H1 (cell line): ENCODE measurements at regions of chr18 and their contacts with region 1.

Region 1: DNA sequence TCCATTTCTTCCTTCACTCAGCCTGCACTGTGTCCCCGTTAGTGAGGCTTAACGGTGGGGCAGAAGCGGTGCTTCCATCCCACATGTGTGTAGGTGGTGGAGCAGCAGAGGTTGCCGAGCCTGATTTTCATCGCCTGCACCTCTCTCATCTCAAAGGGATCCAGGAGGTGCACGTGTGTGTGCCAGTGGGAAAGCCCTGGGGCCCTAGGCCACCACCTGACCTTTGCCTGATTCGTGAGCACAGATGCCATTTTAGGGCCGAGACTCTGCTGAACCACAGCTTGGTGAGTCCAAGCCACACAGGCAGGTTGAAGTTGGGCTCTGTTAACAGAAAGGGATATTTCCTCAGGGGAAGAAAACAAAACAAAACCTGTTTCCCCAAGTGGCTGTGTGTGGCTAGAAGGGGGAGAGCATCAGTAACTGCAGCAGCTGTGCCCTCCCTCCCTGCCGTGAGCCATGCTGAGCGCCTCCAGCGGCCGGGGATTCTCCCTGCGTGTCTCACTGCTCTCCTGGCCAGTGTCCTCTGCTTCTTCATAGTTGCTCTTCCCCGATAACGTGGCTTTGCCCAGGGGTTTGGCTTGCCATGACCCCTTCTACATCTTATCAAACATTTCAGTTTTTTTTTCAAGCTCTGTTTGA is 81.5 kb downstream of the MAPRE2 start:
- DNase-seq: peak in 1 of 2 experiments; percentile 73
- H3K4me3 ChIP-seq: no peak overlapping the region
- H3K27ac ChIP-seq: no peak overlapping the region
- H3K4me1 ChIP-seq: peaks cover 0 to 11% (median 5%) of the 10 kb centered on the region in 4 experiments; a peak in 6 of 7 replicates
- H3K27me3 ChIP-seq: no peaks in the 10 kb centered on the region
- CTCF ChIP-seq: peak; percentile 32 to 80 (median 72); a peak in 3 of 4 replicates
- EP300 ChIP-seq: no peak
- POLR2A ChIP-seq: no peak
- RAD21 ChIP-seq: peak; percentile 32 to 43

Region 2: DNA sequence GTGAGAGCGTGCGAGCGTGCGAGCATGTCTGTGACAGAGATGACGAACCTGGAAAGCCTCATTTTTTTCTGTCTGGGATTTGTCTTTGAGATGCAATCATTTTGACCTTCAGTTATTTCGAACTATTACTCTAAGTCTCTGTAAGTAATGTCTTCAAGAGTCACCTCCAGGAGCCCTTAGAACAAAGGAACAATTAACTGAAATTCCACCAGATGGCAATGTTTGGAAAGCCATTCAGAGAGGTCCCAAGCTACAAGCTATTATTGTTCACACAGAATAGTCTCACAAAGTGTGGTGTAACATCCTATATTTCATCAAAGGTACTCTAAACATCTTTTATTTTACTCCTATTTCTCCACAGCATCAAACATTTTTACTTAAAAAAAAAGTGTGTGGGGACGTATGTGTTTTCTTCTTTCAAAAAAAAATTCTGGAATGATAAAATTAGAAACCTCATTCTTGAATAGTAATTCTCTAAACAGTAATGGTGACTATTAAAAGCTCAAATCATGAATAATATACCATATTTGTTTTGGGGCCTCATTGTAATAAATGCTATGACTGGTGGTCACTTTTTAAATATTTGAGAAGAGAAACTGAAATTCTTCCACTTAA is 116.6 kb before region 1 on chr18:
- CTCF ChIA-PET with region 1: interaction called, 20 read pairs
- POLR2A ChIA-PET with region 1: no interaction called
- DNase-seq: no peak
- H3K4me3 ChIP-seq: no peak overlapping the region
- H3K27ac ChIP-seq: no peak overlapping the region
- H3K4me1 ChIP-seq: peaks cover 0 to 2% (median 0%) of the 10 kb centered on the region in 4 experiments; a peak in 1 of 7 replicates
- H3K27me3 ChIP-seq: no peaks in the 10 kb centered on the region
- CTCF ChIP-seq: peak in 2 of 3 experiments; percentile 57 to 61; a peak in 3 of 4 replicates
- EP300 ChIP-seq: no peak
- POLR2A ChIP-seq: no peak
- RAD21 ChIP-seq: peak; percentile 82 to 89

Region 3: GRCh38 chr18:35073186-35074105 is 49.3 kb before region 1 on chr18:
- CTCF ChIA-PET with region 1: interaction called, 28 read pairs
- POLR2A ChIA-PET with region 1: no interaction called
- DNase-seq: no peak
- H3K4me3 ChIP-seq: no peak overlapping the region
- H3K27ac ChIP-seq: no peak overlapping the region
- H3K4me1 ChIP-seq: peaks cover 0 to 3% (median 2%) of the 10 kb centered on the region in 4 experiments; a peak in 4 of 7 replicates
- H3K27me3 ChIP-seq: no peaks in the 10 kb centered on the region
- CTCF ChIP-seq: no peak
- EP300 ChIP-seq: no peak
- POLR2A ChIP-seq: no peak
- RAD21 ChIP-seq: no peak

Region 4: DNA sequence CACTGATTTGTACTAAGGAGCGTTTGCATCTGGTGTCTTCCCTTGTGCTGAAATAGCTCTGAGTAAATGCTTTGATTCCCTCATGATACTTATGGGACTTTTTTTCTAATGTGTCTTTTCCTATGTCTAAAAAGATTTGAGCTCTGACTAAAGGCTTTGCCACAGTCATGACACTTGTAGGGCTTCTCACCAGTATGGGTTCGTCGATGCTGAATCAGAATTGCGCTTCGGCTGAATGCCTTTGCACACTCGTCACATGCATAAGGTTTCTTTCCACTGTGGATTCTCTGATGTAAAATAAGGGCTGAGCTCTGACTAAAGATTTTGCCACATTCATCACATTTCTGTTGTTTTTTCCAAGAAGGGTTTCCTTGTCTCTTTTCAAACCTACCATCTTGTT is 246.4 kb after region 1 on chr18:
- CTCF ChIA-PET with region 1: no interaction called
- POLR2A ChIA-PET with region 1: no interaction called
- DNase-seq: no peak
- H3K4me3 ChIP-seq: no peak overlapping the region
- H3K27ac ChIP-seq: no peak overlapping the region
- H3K4me1 ChIP-seq: no peaks in the 10 kb centered on the region
- H3K27me3 ChIP-seq: no peaks in the 10 kb centered on the region
- CTCF ChIP-seq: no peak
- EP300 ChIP-seq: no peak
- POLR2A ChIP-seq: no peak
- RAD21 ChIP-seq: no peak